BJ (cell line): ENCODE measurements at regions of chr7 and their contacts with region 1.

Region 1: GRCh38 chr7:30074422-30075030 is 46.3 kb downstream of the PLEKHA8 start:
- DNase-seq: no peak
- H3K4me3 ChIP-seq: no peak overlapping the region
- H3K27me3 ChIP-seq: no peaks in the 10 kb centered on the region
- CTCF ChIP-seq: peak; percentile 57

Region 2: DNA sequence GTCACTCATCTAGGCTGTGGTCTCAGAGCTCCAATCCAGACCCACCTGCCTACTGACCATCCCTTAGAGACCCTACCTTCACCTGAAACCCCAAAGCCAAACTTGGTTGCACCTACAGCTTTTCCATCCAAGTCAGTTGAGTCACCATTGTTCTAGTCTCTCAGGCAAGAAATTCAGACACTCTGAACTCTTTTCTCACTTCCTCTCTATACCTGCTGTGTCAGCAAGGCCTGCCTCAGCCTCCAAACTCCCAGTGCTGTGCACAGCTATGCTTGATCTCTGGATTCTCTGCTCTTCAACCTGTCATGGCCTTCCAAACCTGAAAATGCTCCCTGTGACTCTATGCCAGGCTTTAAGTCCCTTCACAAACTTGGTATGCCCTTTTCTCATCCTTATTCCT is 12.8 kb after region 1 on chr7:
- CTCF ChIA-PET with region 1: interaction called, 35 read pairs
- POLR2A ChIA-PET with region 1: no interaction called
- DNase-seq: no peak
- H3K4me3 ChIP-seq: no peak overlapping the region
- H3K27me3 ChIP-seq: no peaks in the 10 kb centered on the region
- CTCF ChIP-seq: no peak